B cell (primary cell): ENCODE measurements at regions of chr20 and their contacts with region 1.

Region 1: DNA sequence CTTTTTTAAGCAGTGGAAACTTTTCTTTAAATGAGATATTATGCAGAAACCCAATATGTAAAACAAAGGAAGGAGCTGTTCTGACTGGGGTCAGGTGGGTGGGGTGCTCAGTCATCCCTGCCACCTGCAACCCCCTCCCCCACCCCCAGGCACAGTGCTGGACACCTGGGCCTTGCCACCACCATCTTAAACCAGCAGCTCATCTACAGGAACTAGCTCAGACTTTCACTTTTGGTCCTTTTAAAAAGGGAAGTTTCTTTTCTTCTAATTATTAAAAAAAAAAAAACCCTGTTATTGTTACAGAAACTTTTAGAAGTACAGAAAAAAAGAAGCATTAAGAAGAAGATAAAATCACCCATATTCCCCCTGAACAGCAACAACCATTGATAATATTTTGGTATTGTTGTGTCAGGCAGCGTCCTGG is 37.1 kb downstream of the PPP1R16B start:
- DNase-seq: peak; percentile 95
- ATAC-seq: peak; percentile 99
- H3K4me3 ChIP-seq: peak overlapping the region in 2 of 5 experiments; percentile 12 to 48
- H3K4me3 Mint-ChIP-seq: peak overlapping the region; percentile 83
- H3K27ac ChIP-seq: peak overlapping the region; percentile 92 to 96
- H3K27ac Mint-ChIP-seq: peak overlapping the region; percentile 99
- H3K4me1 ChIP-seq: peaks cover 79 to 88% of the 10 kb centered on the region in 2 donors
- H3K4me1 Mint-ChIP-seq: peaks cover 88% of the 10 kb centered on the region
- H3K27me3 ChIP-seq: no peaks in the 10 kb centered on the region
- H3K27me3 Mint-ChIP-seq: no peaks in the 10 kb centered on the region
- CTCF ChIP-seq: no peak

Region 2: DNA sequence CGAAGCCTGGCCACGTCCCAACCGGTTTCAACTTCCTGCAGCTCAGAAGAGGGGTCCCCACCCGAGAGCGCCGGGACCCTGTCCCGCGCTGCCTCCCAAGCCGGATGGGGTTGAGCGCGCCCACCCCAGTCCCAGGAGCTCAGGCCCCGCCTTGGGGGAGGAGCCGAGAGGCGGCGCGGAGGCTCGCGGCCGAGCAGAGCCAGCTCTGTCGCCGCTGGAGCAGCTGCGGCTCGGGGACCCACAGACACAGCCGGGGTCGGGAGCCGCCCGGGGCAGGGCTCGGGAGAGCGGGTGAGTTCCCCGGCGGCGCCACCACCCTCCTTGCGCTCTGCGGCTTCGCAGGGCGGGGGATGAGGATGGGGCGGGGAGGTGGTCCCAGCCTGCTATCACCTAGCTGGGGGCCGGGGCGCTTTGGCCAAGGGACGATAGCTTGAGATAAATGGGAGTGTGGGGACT is 37.0 kb before region 1 on chr20 and contains the start of gene PPP1R16B:
- CTCF ChIA-PET with region 1: interaction called, 44 read pairs
- POLR2A ChIA-PET with region 1: interaction called, 15 read pairs
- intact Hi-C with region 1: loop called (anchors 1 kb)
- DNase-seq: peak; percentile 85
- ATAC-seq: peak; percentile 75
- H3K4me3 ChIP-seq: peak within 1 kb of the TSS; percentile 17 to 99 (median 95)
- H3K4me3 Mint-ChIP-seq: peak within 1 kb of the TSS; percentile 95
- H3K27ac ChIP-seq: peak within 1 kb of the TSS; percentile 99
- H3K27ac Mint-ChIP-seq: peak within 1 kb of the TSS; percentile 96
- H3K4me1 ChIP-seq: peaks cover 49 to 55% of the 10 kb centered on the region in 2 donors
- H3K4me1 Mint-ChIP-seq: peaks cover 53% of the 10 kb centered on the region
- H3K27me3 ChIP-seq: no peaks in the 10 kb centered on the region
- H3K27me3 Mint-ChIP-seq: no peaks in the 10 kb centered on the region
- CTCF ChIP-seq: no peak
- total RNA-seq, gene PPP1R16B: 108 and 112 TPM in 2 replicates

Region 3: GRCh38 chr20:38855356-38855755 is 12.8 kb after region 1 on chr20:
- CTCF ChIA-PET with region 1: interaction called, 59 read pairs
- POLR2A ChIA-PET with region 1: interaction called, 15 read pairs
- intact Hi-C with region 1: loop called (anchors 1 kb)
- DNase-seq: no peak
- ATAC-seq: no peak
- H3K4me3 ChIP-seq: no peak overlapping the region
- H3K4me3 Mint-ChIP-seq: no peak overlapping the region
- H3K27ac ChIP-seq: peak overlapping the region; percentile 17 to 64
- H3K27ac Mint-ChIP-seq: peak overlapping the region; percentile 34
- H3K4me1 ChIP-seq: peaks cover 74 to 80% of the 10 kb centered on the region in 2 donors
- H3K4me1 Mint-ChIP-seq: peaks cover 87% of the 10 kb centered on the region
- H3K27me3 ChIP-seq: no peaks in the 10 kb centered on the region
- H3K27me3 Mint-ChIP-seq: no peaks in the 10 kb centered on the region
- CTCF ChIP-seq: no peak

Region 4: DNA sequence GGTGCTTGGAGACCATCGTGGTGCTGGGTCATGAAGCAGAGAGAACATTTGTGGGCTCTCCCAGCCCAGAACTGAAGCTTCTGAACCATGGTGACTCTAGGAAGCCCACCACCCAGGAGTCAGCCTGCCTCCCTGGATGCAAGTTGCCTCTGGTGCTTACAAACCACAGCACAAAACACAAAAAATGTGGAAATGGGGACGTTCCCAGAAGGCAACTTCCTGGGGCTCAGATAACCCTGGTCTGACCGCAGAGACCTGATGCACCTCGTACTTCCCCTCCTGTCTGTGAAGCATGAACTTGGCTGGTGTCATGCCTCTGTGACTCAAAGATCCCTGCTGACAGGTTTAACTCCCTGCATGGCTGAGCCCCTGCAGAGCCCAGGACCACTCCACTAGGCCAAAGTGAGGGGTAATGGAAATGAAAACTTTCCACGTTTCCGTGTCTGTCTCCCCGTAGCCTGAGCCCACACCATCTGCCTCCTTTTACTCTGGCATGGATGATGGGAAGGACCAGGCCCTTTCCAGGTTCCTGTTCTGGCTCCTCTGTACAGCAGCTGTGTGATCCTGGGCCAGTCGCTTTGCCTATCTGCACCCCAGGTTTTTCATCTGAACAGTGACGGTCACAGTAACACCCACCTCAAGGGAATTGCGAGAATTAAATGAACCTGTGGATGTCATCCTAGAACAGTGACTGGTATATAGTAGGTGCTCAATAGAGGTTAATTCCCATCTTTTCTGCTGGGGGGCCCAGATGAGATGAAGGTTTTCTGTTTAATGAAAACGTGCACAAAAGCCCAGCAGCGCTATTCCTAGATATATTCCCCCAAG is 20.7 kb after region 1 on chr20:
- CTCF ChIA-PET with region 1: interaction called, 59 read pairs
- POLR2A ChIA-PET with region 1: interaction called, 15 read pairs
- intact Hi-C with region 1: loop called (anchors 1 kb)
- DNase-seq: peak; percentile 91
- ATAC-seq: peak; percentile 78
- H3K4me3 ChIP-seq: peak overlapping the region in 4 of 5 experiments; percentile 15 to 39 (median 18)
- H3K4me3 Mint-ChIP-seq: peak overlapping the region; percentile 68
- H3K27ac ChIP-seq: peak overlapping the region; percentile 97
- H3K27ac Mint-ChIP-seq: peak overlapping the region; percentile 86
- H3K4me1 ChIP-seq: peaks cover 83 to 98% of the 10 kb centered on the region in 2 donors
- H3K4me1 Mint-ChIP-seq: peaks cover 90% of the 10 kb centered on the region
- H3K27me3 ChIP-seq: no peaks in the 10 kb centered on the region
- H3K27me3 Mint-ChIP-seq: no peaks in the 10 kb centered on the region
- CTCF ChIP-seq: no peak

Region 5: DNA sequence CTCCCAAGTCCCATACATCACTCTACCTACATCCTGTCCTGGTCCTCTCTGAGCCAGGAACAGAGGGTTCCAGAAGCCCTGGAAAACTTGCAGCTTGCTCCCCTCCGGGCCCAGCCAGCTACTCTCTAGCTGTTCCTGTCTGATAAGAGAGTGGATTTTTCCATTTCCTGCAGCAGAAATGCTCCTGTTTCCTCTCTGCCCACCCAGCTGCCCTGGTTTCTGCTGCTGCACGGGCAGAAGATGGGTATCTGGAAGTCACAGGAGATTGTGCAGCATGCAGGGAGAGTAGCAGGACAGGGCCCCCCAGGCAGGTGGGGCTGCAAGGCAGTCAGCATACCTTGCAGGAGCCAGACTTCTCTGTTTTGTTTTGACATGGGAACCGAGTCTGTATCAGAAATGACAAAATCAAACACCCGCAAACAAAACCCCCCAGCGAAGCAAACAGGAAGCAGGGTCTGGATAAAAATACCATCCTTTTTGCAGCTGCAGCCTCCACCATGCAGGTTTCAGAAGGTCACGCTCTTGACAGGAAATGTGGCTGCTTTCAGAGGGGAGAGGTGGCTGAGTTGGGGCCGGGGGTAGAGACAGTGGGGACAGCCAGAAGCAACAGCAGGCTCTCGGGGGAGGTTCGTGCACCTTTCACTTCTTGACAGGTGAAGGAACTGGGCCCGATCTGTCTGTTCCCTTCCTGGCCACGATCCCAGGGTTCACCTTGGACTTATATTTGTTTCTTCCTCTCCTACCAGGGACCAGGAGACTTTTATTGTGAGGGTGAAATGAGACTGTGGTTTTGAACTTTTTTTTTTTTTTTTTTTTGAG is 32.8 kb after region 1 on chr20:
- CTCF ChIA-PET with region 1: interaction called, 38 read pairs
- POLR2A ChIA-PET with region 1: interaction called, 54 read pairs
- intact Hi-C with region 1: loop called (anchors 1 kb)
- DNase-seq: peak; percentile 93
- ATAC-seq: peak; percentile 73
- H3K4me3 ChIP-seq: peak overlapping the region in 4 of 5 experiments; percentile 14 to 47 (median 35)
- H3K4me3 Mint-ChIP-seq: peak overlapping the region; percentile 86
- H3K27ac ChIP-seq: peak overlapping the region; percentile 93 to 99
- H3K27ac Mint-ChIP-seq: peak overlapping the region; percentile 100
- H3K4me1 ChIP-seq: peaks cover 97 to 99% of the 10 kb centered on the region in 2 donors
- H3K4me1 Mint-ChIP-seq: peaks cover 94% of the 10 kb centered on the region
- H3K27me3 ChIP-seq: no peaks in the 10 kb centered on the region
- H3K27me3 Mint-ChIP-seq: no peaks in the 10 kb centered on the region
- CTCF ChIP-seq: no peak

Region 6: DNA sequence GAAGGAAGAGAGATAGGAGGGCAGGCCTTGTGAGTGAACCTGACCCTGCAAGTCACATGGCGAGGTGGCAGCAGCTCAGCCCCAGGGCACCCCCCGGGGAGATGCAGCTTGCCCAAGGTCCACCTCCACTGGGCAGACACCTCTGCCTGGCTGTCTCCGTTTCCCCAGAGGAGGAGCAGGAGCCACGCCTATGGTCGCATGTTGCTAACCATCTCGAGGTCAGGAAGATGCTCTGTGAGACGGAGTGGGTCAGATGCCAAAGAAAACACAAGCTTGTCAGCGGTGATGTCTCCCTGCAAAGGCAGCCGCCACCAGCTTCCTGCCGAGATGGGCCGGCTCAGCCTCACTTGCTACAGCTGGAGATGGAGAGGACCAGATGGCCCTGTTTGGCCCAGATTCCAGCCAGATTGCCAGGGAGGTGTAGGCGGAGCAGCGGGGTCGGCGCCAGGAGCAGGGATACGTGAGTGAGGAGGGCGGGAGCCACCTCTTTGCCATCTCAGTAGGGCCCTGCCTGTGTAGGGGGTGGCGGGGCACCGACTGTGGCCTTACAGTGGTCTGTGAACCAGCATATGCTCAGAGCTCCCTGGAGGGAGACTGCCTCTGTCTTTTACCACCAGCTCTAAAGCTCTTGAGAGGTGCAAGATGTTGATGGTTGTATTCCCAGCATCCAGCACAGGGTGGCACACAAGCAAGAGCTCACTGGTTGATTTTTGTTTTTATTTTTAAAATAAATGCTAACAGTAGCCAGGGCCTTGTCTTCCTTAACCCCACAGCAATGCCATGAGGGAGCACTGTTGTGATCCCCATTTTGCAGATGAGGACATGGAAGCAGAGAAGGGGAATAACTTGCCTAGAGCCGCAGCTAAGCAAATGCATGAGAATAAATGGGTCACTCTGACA is 40.8 kb after region 1 on chr20:
- CTCF ChIA-PET with region 1: interaction called, 18 read pairs
- POLR2A ChIA-PET with region 1: interaction called, 5 read pairs
- intact Hi-C with region 1: no loop called
- DNase-seq: no peak
- ATAC-seq: no peak
- H3K4me3 ChIP-seq: no peak overlapping the region
- H3K4me3 Mint-ChIP-seq: peak overlapping the region; percentile 82
- H3K27ac ChIP-seq: peak overlapping the region; percentile 66 to 99
- H3K27ac Mint-ChIP-seq: peak overlapping the region; percentile 94
- H3K4me1 ChIP-seq: peaks cover 90 to 99% of the 10 kb centered on the region in 2 donors
- H3K4me1 Mint-ChIP-seq: peaks cover 92% of the 10 kb centered on the region
- H3K27me3 ChIP-seq: no peaks in the 10 kb centered on the region
- H3K27me3 Mint-ChIP-seq: no peaks in the 10 kb centered on the region
- CTCF ChIP-seq: no peak

Region 7: GRCh38 chr20:39142407-39143096 is 300.0 kb after region 1 on chr20:
- CTCF ChIA-PET with region 1: no interaction called
- POLR2A ChIA-PET with region 1: no interaction called
- intact Hi-C with region 1: no loop called
- DNase-seq: no peak
- ATAC-seq: no peak
- H3K4me3 ChIP-seq: no peak overlapping the region
- H3K4me3 Mint-ChIP-seq: no peak overlapping the region
- H3K27ac ChIP-seq: no peak overlapping the region
- H3K27ac Mint-ChIP-seq: no peak overlapping the region
- H3K4me1 ChIP-seq: no peaks in the 10 kb centered on the region
- H3K4me1 Mint-ChIP-seq: no peaks in the 10 kb centered on the region
- H3K27me3 ChIP-seq: no peaks in the 10 kb centered on the region
- H3K27me3 Mint-ChIP-seq: peaks cover 11% of the 10 kb centered on the region
- CTCF ChIP-seq: no peak